CD8-positive, alpha-beta T cell (primary cell): ENCODE measurements at regions of chr16 and their contacts with region 1.

Region 1: DNA sequence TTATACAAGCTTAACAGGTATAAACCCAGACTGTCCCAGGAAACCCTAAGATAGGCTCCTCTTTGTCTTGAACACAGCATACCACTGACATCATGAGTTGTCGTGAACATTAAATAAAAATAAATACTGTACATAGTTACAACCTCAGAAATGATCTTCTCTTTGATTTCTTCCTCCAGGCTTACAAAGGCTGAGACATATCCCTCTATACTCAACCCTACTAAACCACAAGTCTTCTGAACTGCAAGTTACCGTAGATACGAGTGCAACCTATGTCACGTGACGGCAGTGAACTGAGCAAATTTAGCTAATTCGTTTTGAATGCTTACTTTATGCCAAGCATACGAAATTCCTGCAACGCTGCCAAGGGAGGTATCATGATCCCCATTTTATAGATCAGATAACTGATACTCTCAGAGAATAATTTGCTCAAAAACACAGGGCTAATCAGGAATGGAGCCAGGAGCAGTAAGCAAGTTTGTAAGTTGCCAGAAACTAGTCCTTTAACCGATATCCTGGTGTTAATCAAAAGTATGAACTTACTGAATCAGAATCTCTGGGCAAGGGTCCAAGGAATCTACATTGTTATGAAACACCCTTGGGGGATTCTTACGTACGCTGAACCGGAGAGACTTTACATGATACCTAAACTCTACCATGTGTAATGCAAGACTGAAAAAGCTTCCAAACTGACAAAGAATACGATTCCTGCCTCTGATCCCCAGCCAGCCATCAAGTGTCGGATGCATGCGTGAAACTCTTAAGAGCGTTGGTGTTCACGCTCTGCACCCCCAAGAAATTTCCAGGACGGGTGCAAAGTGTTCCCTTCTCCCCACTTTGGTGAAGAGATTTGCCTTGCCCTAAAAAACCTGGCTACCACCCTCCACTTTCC is 106.2 kb downstream of the XYLT1 start:
- DNase-seq: peak; percentile 35 to 93 (median 65)
- ATAC-seq: peak; percentile 77
- H3K4me3 ChIP-seq: peak overlapping the region in 1 of 2 experiments; percentile 7
- H3K4me3 Mint-ChIP-seq: peak overlapping the region; percentile 58
- H3K27ac ChIP-seq: peak overlapping the region; percentile 83 to 98
- H3K27ac Mint-ChIP-seq: peak overlapping the region; percentile 97
- H3K4me1 ChIP-seq: peaks cover 91% of the 10 kb centered on the region
- H3K4me1 Mint-ChIP-seq: peaks cover 97% of the 10 kb centered on the region
- H3K27me3 ChIP-seq: no peaks in the 10 kb centered on the region
- H3K27me3 Mint-ChIP-seq: no peaks in the 10 kb centered on the region
- CTCF ChIP-seq: no peak

Region 2: DNA sequence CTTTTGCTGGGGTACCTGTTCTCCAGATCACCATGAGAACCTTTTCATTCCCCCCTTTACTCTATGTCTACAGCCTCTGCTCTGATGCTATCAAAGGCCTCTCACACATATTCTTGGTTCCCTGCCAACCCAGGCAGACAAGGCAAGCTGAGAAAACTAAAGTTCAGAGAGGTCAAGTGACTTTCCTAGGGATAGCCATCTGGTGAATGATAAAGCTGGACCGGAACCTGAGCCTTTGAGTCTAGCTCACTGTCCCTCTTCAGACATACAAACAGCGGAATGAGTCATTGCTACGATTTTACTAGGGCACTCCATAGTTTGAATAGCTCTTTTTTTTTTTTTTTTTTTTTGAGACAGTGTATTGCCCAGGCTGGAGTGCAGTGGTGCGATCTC is 32.9 kb after region 1 on chr16:
- CTCF ChIA-PET with region 1: interaction called, 3 read pairs
- POLR2A ChIA-PET with region 1: interaction called, 9 read pairs
- intact Hi-C with region 1: loop called (anchors 2 to 5 kb)
- DNase-seq: peak in 2 of 9 experiments; percentile 47 to 54
- ATAC-seq: no peak
- H3K4me3 ChIP-seq: no peak overlapping the region
- H3K4me3 Mint-ChIP-seq: no peak overlapping the region
- H3K27ac ChIP-seq: peak overlapping the region; percentile 19 to 63
- H3K27ac Mint-ChIP-seq: peak overlapping the region; percentile 91
- H3K4me1 ChIP-seq: peaks cover 15% of the 10 kb centered on the region
- H3K4me1 Mint-ChIP-seq: peaks cover 48% of the 10 kb centered on the region
- H3K27me3 ChIP-seq: no peaks in the 10 kb centered on the region
- H3K27me3 Mint-ChIP-seq: no peaks in the 10 kb centered on the region
- CTCF ChIP-seq: no peak

Region 3: GRCh38 chr16:17481736-17482135 is 117.2 kb after region 1 on chr16:
- CTCF ChIA-PET with region 1: no interaction called
- POLR2A ChIA-PET with region 1: no interaction called
- intact Hi-C with region 1: no loop called
- DNase-seq: no peak
- ATAC-seq: no peak
- H3K4me3 ChIP-seq: no peak overlapping the region
- H3K4me3 Mint-ChIP-seq: no peak overlapping the region
- H3K27ac ChIP-seq: no peak overlapping the region
- H3K27ac Mint-ChIP-seq: no peak overlapping the region
- H3K4me1 ChIP-seq: no peaks in the 10 kb centered on the region
- H3K4me1 Mint-ChIP-seq: peaks cover 3% of the 10 kb centered on the region
- H3K27me3 ChIP-seq: no peaks in the 10 kb centered on the region
- H3K27me3 Mint-ChIP-seq: peaks cover 24% of the 10 kb centered on the region
- CTCF ChIP-seq: no peak